Esophagus muscularis mucosa (tissue), 4 donors: ENCODE measurements at regions of chr4 and their contacts with region 1.

Region 1: GRCh38 chr4:43132010-43132582 is 239.6 kb downstream of the GRXCR1 start:
- DNase-seq: no peak
- H3K4me3 ChIP-seq: no peak overlapping the region
- H3K27ac ChIP-seq: no peak overlapping the region
- H3K4me1 ChIP-seq: no peaks in the 10 kb centered on the region
- H3K27me3 ChIP-seq: no peaks in the 10 kb centered on the region
- CTCF ChIP-seq: peak; percentile 16 to 63 (median 49)
- EP300 ChIP-seq: no peak
- POLR2A ChIP-seq: no peak

Region 2: GRCh38 chr4:42678512-42678911 is 453.6 kb before region 1 on chr4:
- intact Hi-C with region 1: no loop called
- DNase-seq: no peak
- H3K4me3 ChIP-seq: no peak overlapping the region
- H3K27ac ChIP-seq: no peak overlapping the region
- H3K4me1 ChIP-seq: no peaks in the 10 kb centered on the region
- H3K27me3 ChIP-seq: no peaks in the 10 kb centered on the region
- CTCF ChIP-seq: no peak
- EP300 ChIP-seq: no peak
- POLR2A ChIP-seq: no peak

Region 3: DNA sequence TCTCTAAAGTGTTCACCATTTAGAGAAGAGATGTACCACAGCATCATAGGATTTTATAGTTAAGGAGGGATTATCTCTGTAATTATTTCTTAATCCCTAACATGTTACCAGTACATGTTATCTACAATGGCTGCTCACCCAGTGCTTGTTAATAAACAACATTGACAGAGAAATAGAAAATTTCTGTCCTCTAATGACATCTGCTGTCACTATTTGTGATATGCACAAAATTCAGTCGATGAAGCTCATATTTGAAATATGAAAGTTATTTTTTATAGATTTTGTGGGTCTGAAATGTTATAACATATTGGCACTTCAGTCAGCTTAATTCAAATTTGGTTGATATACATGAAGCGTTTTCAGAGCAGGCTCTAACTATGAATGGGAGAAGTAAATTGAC is 288.4 kb before region 1 on chr4:
- intact Hi-C with region 1: no loop called
- DNase-seq: no peak
- H3K4me3 ChIP-seq: no peak overlapping the region
- H3K27ac ChIP-seq: no peak overlapping the region
- H3K4me1 ChIP-seq: no peaks in the 10 kb centered on the region
- H3K27me3 ChIP-seq: no peaks in the 10 kb centered on the region
- CTCF ChIP-seq: no peak
- EP300 ChIP-seq: no peak
- POLR2A ChIP-seq: no peak

Region 4: DNA sequence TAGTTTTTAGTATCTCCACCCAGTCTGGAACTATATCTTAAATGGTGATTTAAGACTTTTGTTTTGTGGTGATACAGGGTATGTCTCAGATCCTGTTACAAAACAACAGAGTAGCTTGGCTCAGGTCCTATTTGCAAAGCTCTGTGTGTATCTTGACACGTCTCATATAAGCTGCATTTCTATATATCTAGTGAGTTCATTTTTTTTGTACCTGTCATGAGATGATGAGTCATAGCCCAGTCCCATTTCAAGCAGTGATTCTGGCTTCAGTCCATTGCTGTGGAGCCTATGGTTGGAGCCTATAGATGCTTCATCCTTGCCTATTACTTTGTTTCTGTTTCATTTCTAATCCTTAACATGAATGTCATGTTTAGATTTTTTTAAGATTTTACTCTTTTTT is 216.6 kb before region 1 on chr4:
- intact Hi-C with region 1: no loop called
- DNase-seq: no peak
- H3K4me3 ChIP-seq: no peak overlapping the region
- H3K27ac ChIP-seq: no peak overlapping the region
- H3K4me1 ChIP-seq: no peaks in the 10 kb centered on the region
- H3K27me3 ChIP-seq: no peaks in the 10 kb centered on the region
- CTCF ChIP-seq: no peak
- EP300 ChIP-seq: no peak
- POLR2A ChIP-seq: no peak

Region 5: GRCh38 chr4:43224559-43224958 is 92.5 kb after region 1 on chr4:
- intact Hi-C with region 1: no loop called
- DNase-seq: no peak
- H3K4me3 ChIP-seq: no peak overlapping the region
- H3K27ac ChIP-seq: no peak overlapping the region
- H3K4me1 ChIP-seq: no peaks in the 10 kb centered on the region
- H3K27me3 ChIP-seq: no peaks in the 10 kb centered on the region
- CTCF ChIP-seq: no peak
- EP300 ChIP-seq: no peak
- POLR2A ChIP-seq: no peak

Region 6: DNA sequence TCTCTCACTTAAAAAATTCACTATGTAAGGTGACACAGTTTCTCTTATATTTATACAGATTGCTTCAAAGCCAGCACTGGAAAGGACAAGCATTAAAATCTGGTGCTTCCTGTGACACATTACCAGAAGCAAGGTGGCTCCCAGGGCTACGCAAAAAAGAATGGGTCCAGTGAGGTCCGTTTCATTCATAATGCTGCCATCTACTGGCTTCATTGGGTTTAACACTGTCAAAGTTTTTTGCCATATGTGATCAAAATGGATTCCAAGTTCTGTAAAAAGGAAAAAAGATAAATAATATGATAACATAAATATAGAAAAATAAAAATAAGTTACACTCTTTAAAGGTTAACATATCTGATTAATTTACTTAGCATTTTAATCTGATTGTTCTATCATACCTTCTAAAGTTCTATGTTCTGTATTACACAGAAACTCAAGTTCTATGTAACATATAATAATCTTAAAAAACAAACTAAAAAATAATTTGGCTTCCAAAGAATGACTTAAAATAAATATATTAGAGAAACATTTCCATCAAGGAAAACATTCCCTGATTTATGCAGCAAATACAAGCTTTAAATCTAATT is 1497.3 kb after region 1 on chr4:
- intact Hi-C with region 1: loop called (anchors 10 kb)
- DNase-seq: no peak
- H3K4me3 ChIP-seq: no peak overlapping the region
- H3K27ac ChIP-seq: no peak overlapping the region
- H3K4me1 ChIP-seq: peaks cover 0 to 5% (median 4%) of the 10 kb centered on the region in 4 donors
- H3K27me3 ChIP-seq: no peaks in the 10 kb centered on the region
- CTCF ChIP-seq: peak; percentile 45 to 74 (median 66)
- EP300 ChIP-seq: no peak
- POLR2A ChIP-seq: no peak